HepG2 (cell line): ENCODE measurements at regions of chr20 and their contacts with region 1.

Region 1: DNA sequence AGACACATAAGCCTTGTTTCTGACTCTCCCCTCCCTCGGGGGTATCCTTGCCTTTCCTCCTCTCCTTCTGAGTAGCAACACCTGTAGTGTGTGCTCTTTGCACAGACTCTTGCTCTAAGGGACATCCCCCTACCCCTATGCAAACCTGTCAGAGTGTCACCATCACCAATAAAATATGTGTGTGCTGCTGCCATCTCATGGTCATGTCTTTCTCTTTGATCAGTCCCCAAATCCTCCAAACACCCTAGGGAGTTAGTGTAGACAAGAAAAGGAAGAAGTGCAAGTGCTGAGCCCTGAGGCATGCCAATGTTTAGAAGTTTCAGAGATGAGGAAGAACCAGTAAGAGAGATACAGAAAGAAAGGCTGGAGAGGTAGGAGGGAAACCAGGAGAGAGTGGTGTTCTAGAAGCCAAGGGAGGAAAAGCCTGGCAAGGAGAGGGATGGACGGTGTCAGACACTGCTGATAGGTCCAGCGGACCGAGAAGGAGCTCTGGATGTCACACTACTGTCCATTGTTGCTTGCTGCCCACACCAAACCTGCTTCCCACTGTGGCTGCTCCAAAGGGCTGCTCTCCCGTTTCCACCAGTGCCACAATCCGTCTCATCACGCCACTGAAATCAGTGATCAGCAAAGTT is 16.4 kb downstream of the TRMT6 start:
- DNase-seq: peak; percentile 71
- ATAC-seq: peak; percentile 92
- H3K4me3 ChIP-seq: no peak overlapping the region
- H3K27ac ChIP-seq: no peak overlapping the region
- H3K4me1 ChIP-seq: peaks cover 9% of the 10 kb centered on the region; the same call in 1 of the 2 replicates
- H3K27me3 ChIP-seq: no peaks in the 10 kb centered on the region
- CTCF ChIP-seq: peak; percentile 85
- EP300 ChIP-seq: no peak
- POLR2A ChIP-seq: no peak
- RAD21 ChIP-seq: peak; percentile 64; the same call in 1 of the 2 replicates

Region 2: DNA sequence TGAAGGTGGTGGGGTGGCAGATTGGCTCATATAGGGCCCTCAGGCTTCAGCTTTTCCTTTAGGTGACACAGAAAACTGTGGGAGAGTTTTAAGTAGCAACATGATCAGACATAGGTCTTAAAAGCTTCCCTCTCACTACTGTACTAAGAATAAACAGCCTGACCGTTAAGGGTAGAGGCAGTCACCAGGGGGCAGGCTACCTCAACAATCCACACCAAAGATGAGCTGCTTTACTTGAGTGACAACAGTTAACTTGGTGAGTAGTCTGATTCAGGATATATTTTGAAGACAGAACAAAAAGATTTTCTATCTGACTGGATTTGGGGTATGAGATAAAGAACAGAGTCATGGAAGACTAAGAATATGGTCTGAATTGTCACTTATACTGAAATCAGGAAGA is 376.8 kb before region 1 on chr20:
- CTCF ChIA-PET with region 1: interaction called, 9 read pairs
- POLR2A ChIA-PET with region 1: no interaction called
- in situ Hi-C with region 1: no loop called
- intact Hi-C with region 1: loop called (anchors 1 kb)
- DNase-seq: peak; percentile 61
- ATAC-seq: peak; percentile 98
- H3K4me3 ChIP-seq: no peak overlapping the region
- H3K27ac ChIP-seq: no peak overlapping the region
- H3K4me1 ChIP-seq: no peaks in the 10 kb centered on the region
- H3K27me3 ChIP-seq: no peaks in the 10 kb centered on the region
- CTCF ChIP-seq: peak; percentile 87
- EP300 ChIP-seq: no peak
- POLR2A ChIP-seq: no peak
- RAD21 ChIP-seq: peak; percentile 88

Region 3: DNA sequence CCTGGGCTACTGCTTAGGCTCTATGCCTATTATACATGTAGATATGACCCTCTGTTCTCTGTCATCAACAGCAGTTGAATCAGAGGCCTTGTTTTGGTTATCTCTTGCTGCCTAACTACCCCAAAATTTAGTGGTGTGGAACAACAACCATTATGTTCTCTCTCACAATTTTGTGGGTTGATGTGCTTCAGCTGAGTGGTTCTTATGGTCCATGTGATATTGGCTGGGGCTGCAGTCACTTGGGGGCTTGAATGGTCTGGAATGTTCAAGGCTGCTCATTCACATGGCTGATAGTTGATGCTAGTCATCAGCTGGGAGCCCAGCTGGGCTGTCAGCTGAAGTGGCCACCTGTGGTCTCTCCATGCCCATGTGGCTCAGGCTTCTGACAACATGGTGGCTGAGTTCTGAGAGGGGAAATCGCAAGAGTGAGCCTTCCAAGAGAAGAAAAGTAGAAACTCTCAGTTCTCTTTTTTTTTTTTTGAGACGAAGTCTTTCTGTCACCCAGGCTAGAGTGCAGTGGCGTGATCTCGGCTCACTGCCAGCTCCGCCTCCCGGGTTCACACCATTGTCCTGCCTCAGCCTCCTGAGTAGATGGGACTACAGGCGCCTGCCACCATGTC is 136.0 kb before region 1 on chr20:
- CTCF ChIA-PET with region 1: no interaction called
- POLR2A ChIA-PET with region 1: no interaction called
- in situ Hi-C with region 1: no loop called
- intact Hi-C with region 1: loop called (anchors 5 kb)
- DNase-seq: no peak
- ATAC-seq: peak; percentile 34
- H3K4me3 ChIP-seq: no peak overlapping the region
- H3K27ac ChIP-seq: no peak overlapping the region
- H3K4me1 ChIP-seq: peaks cover 40% of the 10 kb centered on the region
- H3K27me3 ChIP-seq: no peaks in the 10 kb centered on the region
- CTCF ChIP-seq: no peak
- EP300 ChIP-seq: no peak
- POLR2A ChIP-seq: no peak
- RAD21 ChIP-seq: no peak

Region 4: GRCh38 chr20:5806457-5807263 is 127.3 kb before region 1 on chr20:
- CTCF ChIA-PET with region 1: no interaction called
- POLR2A ChIA-PET with region 1: no interaction called
- in situ Hi-C with region 1: loop called (anchors 5 kb)
- intact Hi-C with region 1: loop called (anchors 5 kb)
- DNase-seq: peak; percentile 38
- ATAC-seq: peak; percentile 41; the same call in 2 of the 3 replicates
- H3K4me3 ChIP-seq: no peak overlapping the region
- H3K27ac ChIP-seq: no peak overlapping the region
- H3K4me1 ChIP-seq: peaks cover 62% of the 10 kb centered on the region
- H3K27me3 ChIP-seq: no peaks in the 10 kb centered on the region
- CTCF ChIP-seq: peak; percentile 48
- EP300 ChIP-seq: no peak
- POLR2A ChIP-seq: no peak
- RAD21 ChIP-seq: peak; percentile 66

Region 5: GRCh38 chr20:5822569-5822968 is 111.3 kb before region 1 on chr20:
- CTCF ChIA-PET with region 1: no interaction called
- POLR2A ChIA-PET with region 1: no interaction called
- in situ Hi-C with region 1: no loop called
- intact Hi-C with region 1: loop called (anchors 5 kb)
- DNase-seq: no peak
- ATAC-seq: no peak
- H3K4me3 ChIP-seq: no peak overlapping the region
- H3K27ac ChIP-seq: peak overlapping the region; percentile 73
- H3K4me1 ChIP-seq: peaks cover 71% of the 10 kb centered on the region
- H3K27me3 ChIP-seq: no peaks in the 10 kb centered on the region
- CTCF ChIP-seq: no peak
- EP300 ChIP-seq: no peak
- POLR2A ChIP-seq: no peak
- RAD21 ChIP-seq: no peak

Region 6: GRCh38 chr20:5973172-5973571 is 39.3 kb after region 1 on chr20:
- CTCF ChIA-PET with region 1: no interaction called
- POLR2A ChIA-PET with region 1: no interaction called
- in situ Hi-C with region 1: no loop called
- intact Hi-C with region 1: no loop called
- DNase-seq: no peak
- ATAC-seq: no peak; the same call in 2 of the 3 replicates
- H3K4me3 ChIP-seq: no peak overlapping the region
- H3K27ac ChIP-seq: no peak overlapping the region
- H3K4me1 ChIP-seq: no peaks in the 10 kb centered on the region
- H3K27me3 ChIP-seq: no peaks in the 10 kb centered on the region
- CTCF ChIP-seq: no peak
- EP300 ChIP-seq: no peak
- POLR2A ChIP-seq: no peak
- RAD21 ChIP-seq: no peak